A673 (cell line): ENCODE measurements at regions of chr7 and their contacts with region 1.

Region 1: DNA sequence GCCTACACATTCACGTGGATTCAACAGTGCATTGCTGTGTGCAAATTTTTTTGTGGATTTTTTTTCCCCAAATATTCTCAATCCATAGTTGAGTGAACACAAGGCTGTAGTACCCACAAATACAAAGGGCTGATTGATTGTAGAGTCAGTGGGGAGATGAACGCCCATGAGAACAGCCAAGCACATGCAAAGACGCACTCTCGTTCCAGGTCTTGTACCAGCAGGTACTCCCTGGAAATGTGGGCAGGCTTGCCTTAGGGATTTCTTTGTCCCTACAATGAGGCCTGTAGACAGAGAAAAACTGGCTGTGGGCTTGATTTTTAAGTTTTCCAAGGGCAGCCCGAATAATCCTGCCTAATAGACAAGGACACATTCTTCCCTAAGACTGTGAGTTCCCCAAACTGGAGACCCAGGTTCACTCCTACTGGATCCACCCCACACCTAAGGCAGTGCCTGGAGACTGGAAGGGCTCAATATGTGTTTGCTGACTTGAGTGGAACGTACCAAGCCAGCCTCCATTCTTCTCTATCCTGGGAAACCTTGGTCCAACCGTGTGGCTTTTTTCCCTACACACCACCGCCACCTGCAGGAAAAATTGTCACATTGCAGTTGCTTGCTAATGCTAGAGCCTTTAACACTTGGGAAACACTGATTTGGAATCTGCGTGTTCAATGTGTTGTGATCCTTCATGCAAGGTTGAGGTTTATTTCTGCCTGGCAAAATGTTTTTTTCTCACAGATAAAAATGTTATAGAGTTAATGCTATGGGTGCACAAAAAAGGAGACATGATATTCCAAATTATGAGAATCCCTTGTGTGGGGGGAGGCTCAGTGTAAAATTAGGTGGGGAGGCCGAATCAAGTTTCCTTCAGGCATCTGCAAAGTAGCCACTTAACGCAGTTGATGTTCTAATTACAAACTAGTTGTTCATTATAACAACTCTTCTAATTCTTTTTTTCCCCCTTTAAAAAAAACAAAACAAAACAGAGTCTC is 49.3 kb downstream of the PPP1R17 start:
- DNase-seq: peak; percentile 87
- H3K4me3 ChIP-seq: no peak overlapping the region
- H3K27ac ChIP-seq: no peak overlapping the region
- H3K4me1 ChIP-seq: peaks cover 4% of the 10 kb centered on the region
- H3K27me3 ChIP-seq: no peaks in the 10 kb centered on the region
- CTCF ChIP-seq: peak; percentile 91

Region 2: DNA sequence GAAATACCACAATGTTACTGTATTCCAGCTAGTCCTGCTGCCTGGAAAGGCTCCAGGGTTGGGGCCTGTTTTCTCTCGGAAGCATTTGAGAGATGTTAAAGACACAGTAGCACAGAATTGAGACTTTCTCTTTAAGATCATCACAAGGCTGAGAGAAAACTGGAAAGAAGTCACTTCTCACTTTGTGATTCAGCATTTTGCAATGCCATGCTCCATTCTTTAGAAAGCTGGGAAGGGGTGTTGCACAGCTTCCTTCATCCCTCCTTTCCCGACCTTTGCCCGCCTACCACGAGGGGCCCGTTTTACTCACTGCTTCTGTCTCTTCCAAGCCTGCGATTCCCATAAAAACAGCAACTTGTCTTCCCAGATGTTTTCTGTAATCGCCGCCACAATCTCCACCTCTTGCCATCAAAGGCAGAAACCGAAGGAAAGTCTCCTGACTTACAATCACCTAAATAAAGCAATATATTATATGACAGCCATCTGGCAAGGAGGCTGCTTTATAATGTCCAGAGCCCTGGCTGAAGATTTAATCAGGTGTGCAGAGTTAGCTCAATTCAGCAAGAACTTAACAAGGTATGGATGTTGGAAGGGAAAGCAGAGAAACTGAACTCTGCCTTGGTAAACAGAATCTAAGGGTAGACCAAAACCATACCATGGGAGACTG is 1276.6 kb before region 1 on chr7:
- CTCF ChIA-PET with region 1: no interaction called
- POLR2A ChIA-PET with region 1: no interaction called
- intact Hi-C with region 1: no loop called
- DNase-seq: no peak
- H3K4me3 ChIP-seq: no peak overlapping the region
- H3K27ac ChIP-seq: no peak overlapping the region
- H3K4me1 ChIP-seq: no peaks in the 10 kb centered on the region
- H3K27me3 ChIP-seq: no peaks in the 10 kb centered on the region
- CTCF ChIP-seq: no peak

Region 3: GRCh38 chr7:30983042-30983913 is 753.0 kb before region 1 on chr7:
- CTCF ChIA-PET with region 1: no interaction called
- POLR2A ChIA-PET with region 1: no interaction called
- intact Hi-C with region 1: loop called (anchors 5 kb)
- DNase-seq: peak; percentile 85
- H3K4me3 ChIP-seq: no peak overlapping the region
- H3K27ac ChIP-seq: no peak overlapping the region
- H3K4me1 ChIP-seq: no peaks in the 10 kb centered on the region
- H3K27me3 ChIP-seq: no peaks in the 10 kb centered on the region
- CTCF ChIP-seq: peak; percentile 93

Region 4: DNA sequence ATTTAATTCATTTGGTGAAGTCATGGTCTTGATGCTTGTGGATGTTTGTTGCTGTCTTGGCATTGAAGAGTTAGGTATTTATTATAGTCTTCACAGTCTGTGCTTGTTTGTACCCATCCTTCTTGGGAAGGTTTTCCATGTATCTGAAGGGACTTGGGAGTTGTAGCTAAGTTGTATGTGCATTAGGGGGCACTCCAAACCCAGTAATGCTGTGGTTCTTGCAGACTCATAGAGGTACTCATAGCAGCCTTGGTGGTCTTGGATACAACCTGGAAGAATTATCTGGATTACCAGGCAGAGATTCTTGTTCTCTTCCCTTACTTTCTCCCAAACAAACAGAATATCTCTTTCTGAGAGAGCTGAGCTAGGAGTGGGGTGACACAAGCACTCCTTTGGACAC is 590.9 kb before region 1 on chr7:
- CTCF ChIA-PET with region 1: no interaction called
- POLR2A ChIA-PET with region 1: no interaction called
- intact Hi-C with region 1: loop called (anchors 2 kb)
- DNase-seq: peak; percentile 68
- H3K4me3 ChIP-seq: no peak overlapping the region
- H3K27ac ChIP-seq: no peak overlapping the region
- H3K4me1 ChIP-seq: no peaks in the 10 kb centered on the region
- H3K27me3 ChIP-seq: no peaks in the 10 kb centered on the region
- CTCF ChIP-seq: peak; percentile 61

Region 5: DNA sequence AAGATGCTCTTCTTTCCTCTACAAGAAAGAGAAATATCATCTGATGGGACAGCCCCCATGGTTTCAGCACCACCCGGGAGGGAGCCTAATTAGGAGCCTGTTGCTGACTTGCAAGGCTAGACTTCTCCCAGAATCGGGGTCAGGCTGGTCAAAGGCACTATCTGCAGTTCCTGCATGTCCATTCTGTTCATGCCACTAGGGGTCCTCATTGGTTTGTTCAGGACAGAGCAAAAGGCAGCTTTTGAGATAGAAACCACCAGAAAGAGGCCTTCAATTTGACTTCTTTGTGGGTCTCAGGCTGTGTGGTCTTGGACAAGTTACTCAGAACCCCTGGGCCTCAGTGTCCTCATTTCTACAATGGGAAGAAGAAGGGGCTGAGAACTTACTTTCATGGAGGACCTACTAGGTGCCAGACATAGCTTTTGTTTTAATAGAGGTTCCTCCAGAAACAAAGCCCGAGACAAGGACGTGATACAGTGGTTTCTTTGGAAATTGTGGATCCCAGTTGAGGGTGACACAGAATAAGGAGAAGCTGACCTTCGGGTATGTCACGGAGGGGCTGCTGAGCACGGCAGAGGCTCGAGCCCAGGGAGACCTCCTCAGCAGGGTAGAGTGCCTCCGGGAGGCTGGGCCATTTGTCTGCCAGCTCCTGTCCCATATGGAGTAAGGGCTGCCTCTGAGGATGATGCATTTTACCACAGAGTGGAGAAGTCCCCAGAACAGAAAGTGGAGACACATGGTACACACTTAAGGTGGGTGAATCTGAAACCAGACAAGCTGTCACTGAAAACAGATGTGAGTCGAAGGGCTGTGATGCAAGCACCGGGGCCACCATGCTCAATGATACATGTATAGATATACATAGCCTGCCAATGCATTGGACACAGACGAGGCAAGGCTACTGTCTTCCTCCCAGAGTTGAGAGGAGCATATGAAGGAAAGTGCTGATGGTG is 362.7 kb before region 1 on chr7:
- CTCF ChIA-PET with region 1: no interaction called
- POLR2A ChIA-PET with region 1: no interaction called
- intact Hi-C with region 1: loop called (anchors 1 kb)
- DNase-seq: peak; percentile 85
- H3K4me3 ChIP-seq: no peak overlapping the region
- H3K27ac ChIP-seq: peak overlapping the region; percentile 10
- H3K4me1 ChIP-seq: peaks cover 9% of the 10 kb centered on the region
- H3K27me3 ChIP-seq: no peaks in the 10 kb centered on the region
- CTCF ChIP-seq: peak; percentile 85

Region 6: GRCh38 chr7:31648288-31648687 is 88.0 kb before region 1 on chr7:
- CTCF ChIA-PET with region 1: no interaction called
- POLR2A ChIA-PET with region 1: no interaction called
- intact Hi-C with region 1: loop called (anchors 2 kb)
- DNase-seq: peak; percentile 35
- H3K4me3 ChIP-seq: no peak overlapping the region
- H3K27ac ChIP-seq: no peak overlapping the region
- H3K4me1 ChIP-seq: no peaks in the 10 kb centered on the region
- H3K27me3 ChIP-seq: no peaks in the 10 kb centered on the region
- CTCF ChIP-seq: peak; percentile 46